ENCODE measurements at regions of chr1 and their contacts with region 1.

Region 1: DNA sequence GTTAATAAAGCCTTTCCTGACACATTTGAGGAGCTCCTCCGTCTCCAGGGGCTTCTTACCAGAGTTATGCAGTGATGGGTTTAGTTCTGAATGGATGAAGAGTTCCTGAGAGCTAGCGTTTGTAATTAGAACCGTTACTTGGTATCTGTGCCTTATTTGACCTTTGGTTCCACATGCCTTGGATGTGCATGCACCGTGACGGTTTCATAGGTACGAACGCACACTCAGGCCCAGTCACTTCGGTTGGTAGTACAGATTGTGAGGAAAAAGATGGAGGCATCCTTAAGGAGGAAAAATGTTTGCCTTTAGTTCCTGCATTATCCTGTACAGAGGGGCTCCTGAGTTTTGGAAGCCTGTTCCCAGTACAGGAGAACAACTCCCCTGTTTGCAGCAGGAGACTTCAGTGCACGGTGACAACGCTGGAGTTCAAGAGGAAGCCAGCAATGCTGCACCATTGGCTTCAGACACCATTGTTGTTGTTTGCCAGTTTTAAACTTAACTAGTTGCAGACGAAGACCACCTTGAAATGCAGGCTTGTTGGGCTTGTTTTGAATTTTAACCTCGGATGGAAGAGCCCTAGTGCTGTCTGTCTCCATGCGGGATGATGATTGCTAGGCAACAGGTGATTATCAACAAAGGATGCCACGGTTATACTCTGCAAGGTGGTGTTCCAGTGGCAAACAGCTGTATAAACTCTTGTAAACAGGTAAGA is 8.2 kb downstream of the RBM15 start:
- DNase-seq: no peak
- ATAC-seq: peak in 2 of 4 donors; percentile 32 to 39
- H3K4me3 ChIP-seq: no peak overlapping the region
- H3K27ac ChIP-seq: no peak overlapping the region
- H3K4me1 ChIP-seq: peaks cover 6 to 95% (median 82%) of the 10 kb centered on the region in 12 donors
- H3K27me3 ChIP-seq: no peaks in the 10 kb centered on the region
- CTCF ChIP-seq: no peak
- POLR2A ChIP-seq: no peak

Region 2: DNA sequence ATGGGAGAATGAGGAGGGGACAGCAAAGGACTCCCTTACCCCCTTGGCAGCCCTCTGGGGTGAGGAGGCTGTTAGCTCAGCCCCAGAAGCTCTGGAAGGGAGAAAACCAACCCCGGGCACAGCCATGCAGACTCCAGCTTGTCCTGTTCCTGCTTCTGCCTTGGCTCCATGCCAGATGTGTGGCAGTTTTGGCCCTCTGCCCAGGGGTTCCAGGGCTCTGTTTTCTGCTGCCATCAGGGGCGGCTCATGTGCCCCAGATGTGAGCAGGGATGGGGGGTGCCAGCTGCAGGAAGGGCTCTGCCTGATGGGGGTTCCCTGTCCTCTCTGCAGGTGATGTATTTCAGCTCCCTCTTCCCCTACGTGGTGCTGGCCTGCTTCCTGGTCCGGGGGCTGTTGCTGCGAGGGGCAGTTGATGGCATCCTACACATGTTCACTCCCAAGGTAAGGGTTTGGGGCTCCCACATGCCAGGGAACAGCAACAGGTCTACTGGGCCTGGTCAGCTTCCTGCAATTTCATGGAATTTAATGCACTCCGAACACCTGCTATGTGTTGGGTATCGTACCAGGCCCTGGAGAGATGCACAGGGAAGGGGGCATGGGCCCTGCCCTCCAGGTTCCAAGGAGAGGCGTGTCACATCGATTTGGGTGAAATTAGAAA is 170.9 kb before region 1 on chr1:
- intact Hi-C with region 1: no loop called
- DNase-seq: peak in 4 of 5 donors; percentile 54 to 67 (median 59)
- ATAC-seq: peak; percentile 50 to 77 (median 60)
- H3K4me3 ChIP-seq: no peak overlapping the region
- H3K27ac ChIP-seq: no peak overlapping the region
- H3K4me1 ChIP-seq: peaks cover 0 to 7% (median 0%) of the 10 kb centered on the region in 12 donors
- H3K27me3 ChIP-seq: no peaks in the 10 kb centered on the region
- CTCF ChIP-seq: no peak
- POLR2A ChIP-seq: no peak

Region 3: DNA sequence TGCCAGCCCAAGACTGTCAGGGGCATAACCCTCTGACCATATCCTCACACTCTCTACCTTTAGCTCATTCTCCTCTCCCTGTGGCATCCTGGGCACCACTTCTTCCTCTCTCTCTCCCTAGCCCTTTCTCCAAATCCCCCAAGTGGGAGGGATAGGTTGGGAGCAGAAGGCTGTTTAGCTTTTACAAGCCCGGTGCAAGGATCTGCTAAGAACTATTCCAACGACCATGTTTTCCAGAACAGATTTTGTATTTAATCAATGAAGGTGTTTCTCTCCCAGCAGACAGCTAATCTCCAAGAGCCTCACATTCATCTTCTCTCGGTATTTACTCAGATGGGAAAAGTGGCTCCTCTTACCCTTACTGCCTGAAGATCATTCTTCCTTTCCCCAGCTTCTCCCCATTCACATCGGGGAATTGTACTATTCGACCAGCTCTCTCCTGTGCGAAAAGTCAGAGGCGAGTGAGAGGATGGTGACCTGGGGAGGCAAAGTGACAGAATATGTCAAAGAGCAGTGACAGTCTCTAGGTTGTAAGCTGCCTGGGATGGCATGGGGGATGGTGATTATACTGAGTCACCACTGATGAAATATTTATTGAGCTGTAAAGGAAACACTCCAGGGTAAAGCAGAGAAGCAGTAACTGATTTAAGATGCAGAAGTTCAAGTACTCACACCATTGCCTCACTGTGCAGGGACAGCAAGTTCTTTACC is 55.2 kb before region 1 on chr1:
- intact Hi-C with region 1: no loop called
- DNase-seq: no peak
- ATAC-seq: peak in 1 of 4 donors; percentile 38
- H3K4me3 ChIP-seq: no peak overlapping the region
- H3K27ac ChIP-seq: no peak overlapping the region
- H3K4me1 ChIP-seq: peaks cover 0 to 4% (median 0%) of the 10 kb centered on the region in 12 donors
- H3K27me3 ChIP-seq: no peaks in the 10 kb centered on the region
- CTCF ChIP-seq: no peak
- POLR2A ChIP-seq: no peak

Region 4: DNA sequence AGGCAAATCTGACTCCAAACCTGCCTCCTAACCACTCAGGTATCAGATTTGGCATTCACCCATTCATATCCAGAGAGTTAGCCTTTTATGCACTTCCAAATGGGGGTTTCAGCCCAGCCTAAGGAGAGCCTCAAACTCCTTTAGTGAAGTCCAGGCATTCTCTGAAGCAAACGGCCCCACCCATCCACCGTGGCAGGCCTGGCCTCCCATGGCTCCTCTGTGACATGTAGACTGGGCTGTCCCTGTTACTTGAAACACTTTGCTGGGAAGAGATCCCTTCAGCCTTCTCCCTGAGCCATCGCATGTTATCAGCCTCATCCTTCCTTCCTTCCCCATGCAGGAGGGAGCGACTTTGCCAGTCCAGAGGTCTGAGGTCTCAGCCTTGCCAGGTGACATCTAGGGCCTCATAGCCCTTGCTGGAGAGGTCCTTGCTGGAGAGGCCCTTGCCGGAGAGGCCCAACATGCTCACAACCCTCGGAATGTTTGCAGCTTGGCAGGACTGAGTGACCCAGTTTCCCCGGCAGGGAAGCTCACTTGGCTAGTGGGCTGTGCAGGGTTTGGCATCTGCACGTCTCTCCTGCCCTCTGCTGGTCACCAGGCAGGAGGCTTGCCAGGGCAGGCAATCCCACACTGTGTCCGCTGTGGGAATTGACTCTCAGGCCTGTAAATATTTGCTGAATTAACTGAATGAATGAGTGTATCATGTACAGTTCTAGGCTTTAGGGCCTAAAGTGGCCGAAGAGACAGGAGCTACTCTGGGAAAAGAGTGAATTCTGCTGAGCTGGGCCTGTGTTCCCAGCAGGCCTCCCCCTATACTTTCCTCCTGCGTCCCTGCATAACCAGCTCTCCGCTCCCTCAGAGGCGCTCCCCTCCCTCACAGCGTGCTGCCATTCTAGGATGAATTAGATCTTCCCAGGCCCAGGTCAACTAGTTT is 34.9 kb before region 1 on chr1:
- intact Hi-C with region 1: no loop called
- DNase-seq: peak; percentile 83 to 89 (median 85)
- ATAC-seq: peak; percentile 89 to 96 (median 94)
- H3K4me3 ChIP-seq: no peak overlapping the region
- H3K27ac ChIP-seq: no peak overlapping the region
- H3K4me1 ChIP-seq: peaks cover 0 to 50% (median 17%) of the 10 kb centered on the region in 12 donors
- H3K27me3 ChIP-seq: no peaks in the 10 kb centered on the region
- CTCF ChIP-seq: peak; percentile 84 to 98 (median 94)
- POLR2A ChIP-seq: no peak

Region 5: GRCh38 chr1:110390692-110391245 is 43.4 kb after region 1 on chr1 and contains the start of gene SLC16A4:
- intact Hi-C with region 1: loop called in 2 of 10 experiments (anchors 5 kb)
- DNase-seq: peak in 1 of 5 donors; percentile 17
- ATAC-seq: peak; percentile 42 to 89 (median 84)
- H3K4me3 ChIP-seq: peak within 1 kb of the TSS in 10 of 12 donors; percentile 23 to 58 (median 44)
- H3K27ac ChIP-seq: peak within 1 kb of the TSS in 9 of 12 donors; percentile 2 to 69 (median 55)
- H3K4me1 ChIP-seq: peaks cover 0 to 4% (median 0%) of the 10 kb centered on the region in 12 donors
- H3K27me3 ChIP-seq: no peaks in the 10 kb centered on the region
- CTCF ChIP-seq: no peak
- POLR2A ChIP-seq: no peak
- total RNA-seq, gene SLC16A4: 1.6 to 4.8 (median 2.3) TPM

Measured in heart left ventricle (tissue), 16 donors.